CD4-positive, alpha-beta memory T cell (primary cell): ENCODE measurements at regions of chr17 and their contacts with region 1.

Region 1: DNA sequence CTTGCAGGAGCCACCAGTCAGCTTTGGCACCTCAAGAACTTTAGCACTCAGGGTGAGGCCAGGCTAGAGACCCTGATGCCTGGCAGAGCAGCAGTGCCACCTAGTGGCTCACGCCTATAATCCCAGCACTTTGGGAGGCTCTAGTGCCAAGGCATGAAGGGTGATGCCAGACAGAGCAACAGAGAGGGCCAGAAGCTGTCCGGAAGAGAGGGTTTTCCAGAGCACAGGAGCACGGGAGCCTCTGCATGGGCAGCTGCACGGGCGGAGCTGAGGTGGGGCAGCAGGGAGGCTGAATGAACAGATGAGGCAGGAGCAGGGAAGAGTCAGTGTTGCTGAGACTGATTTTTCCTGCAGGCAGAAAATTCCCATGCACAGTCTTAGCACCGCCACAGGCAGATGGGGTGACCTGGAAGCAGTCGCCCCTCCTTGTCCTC is 38.9 kb downstream of the MYH3 start:
- DNase-seq: peak in 4 of 5 donors; percentile 39 to 46 (median 46)
- H3K4me3 ChIP-seq: no peak overlapping the region
- H3K4me3 Mint-ChIP-seq: no peak overlapping the region
- H3K27ac ChIP-seq: no peak overlapping the region
- H3K27ac Mint-ChIP-seq: peak overlapping the region in 1 of 7 donors; percentile 38
- H3K4me1 ChIP-seq: no peaks in the 10 kb centered on the region
- H3K4me1 Mint-ChIP-seq: peaks cover 0 to 4% (median 0%) of the 10 kb centered on the region in 4 donors
- H3K27me3 ChIP-seq: no peaks in the 10 kb centered on the region
- H3K27me3 Mint-ChIP-seq: peaks cover 4 to 8% of the 10 kb centered on the region in 2 donors

Region 2: DNA sequence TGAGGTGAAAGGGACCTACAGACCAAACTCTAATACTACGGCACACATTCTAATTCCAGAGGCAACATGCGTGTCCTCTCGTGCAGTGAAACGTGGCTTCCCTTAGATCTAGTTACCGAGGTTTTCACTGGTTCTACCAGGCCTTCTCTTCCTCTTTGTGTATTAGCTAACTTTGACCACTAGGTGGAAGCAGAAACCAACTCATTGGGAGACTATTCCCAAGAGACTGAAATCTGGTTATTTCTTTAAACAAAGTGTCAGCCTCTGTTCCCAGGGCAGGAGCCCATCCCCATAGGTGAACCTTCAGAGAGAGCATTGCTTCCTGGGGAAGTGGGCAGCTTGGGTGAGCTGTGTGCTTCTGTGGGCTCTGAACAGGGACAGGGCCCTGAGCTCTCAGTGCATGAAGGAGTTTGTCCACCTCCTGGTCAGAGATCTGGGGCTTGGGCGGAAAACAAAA is 693.5 kb before region 1 on chr17:
- CTCF ChIA-PET with region 1: interaction called, 11 read pairs
- POLR2A ChIA-PET with region 1: no interaction called
- intact Hi-C with region 1: no loop called
- DNase-seq: peak in 4 of 5 donors; percentile 26 to 45 (median 38)
- H3K4me3 ChIP-seq: no peak overlapping the region
- H3K4me3 Mint-ChIP-seq: no peak overlapping the region
- H3K27ac ChIP-seq: no peak overlapping the region
- H3K27ac Mint-ChIP-seq: peak overlapping the region in 1 of 7 donors; percentile 82
- H3K4me1 ChIP-seq: no peaks in the 10 kb centered on the region
- H3K4me1 Mint-ChIP-seq: peaks cover 2 to 6% (median 3%) of the 10 kb centered on the region in 4 donors
- H3K27me3 ChIP-seq: no peaks in the 10 kb centered on the region
- H3K27me3 Mint-ChIP-seq: no peaks in the 10 kb centered on the region

Region 3: GRCh38 chr17:10349403-10349802 is 268.8 kb before region 1 on chr17:
- CTCF ChIA-PET with region 1: no interaction called
- POLR2A ChIA-PET with region 1: no interaction called
- intact Hi-C with region 1: no loop called
- DNase-seq: no peak
- H3K4me3 ChIP-seq: no peak overlapping the region
- H3K4me3 Mint-ChIP-seq: no peak overlapping the region
- H3K27ac ChIP-seq: no peak overlapping the region
- H3K27ac Mint-ChIP-seq: no peak overlapping the region
- H3K4me1 ChIP-seq: no peaks in the 10 kb centered on the region
- H3K4me1 Mint-ChIP-seq: no peaks in the 10 kb centered on the region
- H3K27me3 ChIP-seq: no peaks in the 10 kb centered on the region
- H3K27me3 Mint-ChIP-seq: no peaks in the 10 kb centered on the region

Region 4: DNA sequence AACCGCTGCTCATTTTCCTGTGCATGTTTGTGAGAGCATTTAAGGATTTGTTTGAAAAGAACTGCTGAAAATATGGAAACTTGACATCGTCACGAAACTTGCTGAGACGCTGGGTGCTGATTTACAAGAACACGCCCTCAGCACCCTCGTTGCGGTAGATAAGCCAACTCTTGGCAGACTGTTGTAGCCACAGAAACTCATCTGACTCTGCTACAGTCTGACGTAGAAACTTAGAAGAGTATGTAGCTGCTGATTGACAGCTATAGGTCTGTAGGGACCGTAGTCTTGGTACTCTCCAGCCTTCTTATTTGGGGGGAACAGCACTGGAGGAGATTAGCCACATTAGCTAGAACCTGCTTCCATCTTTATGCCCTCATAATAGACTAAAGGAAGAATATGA is 32.7 kb before region 1 on chr17:
- CTCF ChIA-PET with region 1: interaction called, 11 read pairs
- POLR2A ChIA-PET with region 1: no interaction called
- intact Hi-C with region 1: no loop called
- DNase-seq: no peak
- H3K4me3 ChIP-seq: no peak overlapping the region
- H3K4me3 Mint-ChIP-seq: no peak overlapping the region
- H3K27ac ChIP-seq: no peak overlapping the region
- H3K27ac Mint-ChIP-seq: no peak overlapping the region
- H3K4me1 ChIP-seq: no peaks in the 10 kb centered on the region
- H3K4me1 Mint-ChIP-seq: no peaks in the 10 kb centered on the region
- H3K27me3 ChIP-seq: no peaks in the 10 kb centered on the region
- H3K27me3 Mint-ChIP-seq: peaks cover 13 to 17% of the 10 kb centered on the region in 2 donors

Region 5: GRCh38 chr17:10631048-10631700 is 13.0 kb after region 1 on chr17:
- CTCF ChIA-PET with region 1: interaction called, 185 read pairs
- POLR2A ChIA-PET with region 1: no interaction called
- intact Hi-C with region 1: no loop called
- DNase-seq: peak in 1 of 5 donors; percentile 33
- H3K4me3 ChIP-seq: no peak overlapping the region
- H3K4me3 Mint-ChIP-seq: peak overlapping the region in 1 of 8 donors; percentile 45
- H3K27ac ChIP-seq: no peak overlapping the region
- H3K27ac Mint-ChIP-seq: no peak overlapping the region
- H3K4me1 ChIP-seq: no peaks in the 10 kb centered on the region
- H3K4me1 Mint-ChIP-seq: peaks cover 0 to 6% (median 4%) of the 10 kb centered on the region in 4 donors
- H3K27me3 ChIP-seq: no peaks in the 10 kb centered on the region
- H3K27me3 Mint-ChIP-seq: no peaks in the 10 kb centered on the region

Region 6: DNA sequence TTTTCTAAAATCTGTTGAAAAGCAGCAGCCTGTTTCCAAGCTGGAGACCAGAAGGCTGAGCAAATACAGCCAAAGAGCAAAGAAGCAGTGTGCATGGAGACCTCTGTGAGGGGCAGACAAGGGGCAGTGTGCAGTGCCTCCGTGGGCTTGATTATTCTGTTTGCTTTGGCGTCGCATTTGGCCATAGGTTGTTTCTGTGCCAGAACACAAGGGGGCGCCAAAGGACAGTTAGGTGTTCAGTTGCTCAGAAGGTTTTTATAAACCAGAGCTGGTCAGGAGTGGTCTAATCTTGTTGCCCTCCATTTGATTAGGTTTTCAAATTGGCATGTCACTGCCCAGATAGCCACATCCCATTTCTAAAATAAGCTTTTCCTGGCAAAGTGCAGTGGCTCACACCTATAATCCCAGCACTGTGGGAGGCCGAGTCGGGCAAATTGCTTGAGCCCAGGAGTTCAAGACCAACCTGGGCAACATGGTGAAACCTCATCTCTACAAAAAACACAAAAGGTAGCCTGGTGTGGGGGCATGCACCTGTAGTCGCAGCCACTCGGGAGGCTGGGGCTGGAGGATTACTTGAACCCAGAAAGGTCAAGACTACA is 28.3 kb after region 1 on chr17:
- CTCF ChIA-PET with region 1: interaction called, 39 read pairs
- POLR2A ChIA-PET with region 1: no interaction called
- intact Hi-C with region 1: no loop called
- DNase-seq: peak; percentile 58 to 65 (median 63)
- H3K4me3 ChIP-seq: no peak overlapping the region
- H3K4me3 Mint-ChIP-seq: no peak overlapping the region
- H3K27ac ChIP-seq: no peak overlapping the region
- H3K27ac Mint-ChIP-seq: no peak overlapping the region
- H3K4me1 ChIP-seq: no peaks in the 10 kb centered on the region
- H3K4me1 Mint-ChIP-seq: peaks cover 0 to 5% (median 2%) of the 10 kb centered on the region in 4 donors
- H3K27me3 ChIP-seq: no peaks in the 10 kb centered on the region
- H3K27me3 Mint-ChIP-seq: no peaks in the 10 kb centered on the region

Region 7: GRCh38 chr17:10718547-10718946 is 100.3 kb after region 1 on chr17:
- CTCF ChIA-PET with region 1: no interaction called
- POLR2A ChIA-PET with region 1: no interaction called
- intact Hi-C with region 1: no loop called
- DNase-seq: no peak
- H3K4me3 ChIP-seq: no peak overlapping the region
- H3K4me3 Mint-ChIP-seq: no peak overlapping the region
- H3K27ac ChIP-seq: no peak overlapping the region
- H3K27ac Mint-ChIP-seq: peak overlapping the region in 2 of 7 donors; percentile 25 to 54
- H3K4me1 ChIP-seq: no peaks in the 10 kb centered on the region
- H3K4me1 Mint-ChIP-seq: peaks cover 0 to under 1% (median 0%) of the 10 kb centered on the region in 4 donors
- H3K27me3 ChIP-seq: no peaks in the 10 kb centered on the region
- H3K27me3 Mint-ChIP-seq: no peaks in the 10 kb centered on the region

Region 8: DNA sequence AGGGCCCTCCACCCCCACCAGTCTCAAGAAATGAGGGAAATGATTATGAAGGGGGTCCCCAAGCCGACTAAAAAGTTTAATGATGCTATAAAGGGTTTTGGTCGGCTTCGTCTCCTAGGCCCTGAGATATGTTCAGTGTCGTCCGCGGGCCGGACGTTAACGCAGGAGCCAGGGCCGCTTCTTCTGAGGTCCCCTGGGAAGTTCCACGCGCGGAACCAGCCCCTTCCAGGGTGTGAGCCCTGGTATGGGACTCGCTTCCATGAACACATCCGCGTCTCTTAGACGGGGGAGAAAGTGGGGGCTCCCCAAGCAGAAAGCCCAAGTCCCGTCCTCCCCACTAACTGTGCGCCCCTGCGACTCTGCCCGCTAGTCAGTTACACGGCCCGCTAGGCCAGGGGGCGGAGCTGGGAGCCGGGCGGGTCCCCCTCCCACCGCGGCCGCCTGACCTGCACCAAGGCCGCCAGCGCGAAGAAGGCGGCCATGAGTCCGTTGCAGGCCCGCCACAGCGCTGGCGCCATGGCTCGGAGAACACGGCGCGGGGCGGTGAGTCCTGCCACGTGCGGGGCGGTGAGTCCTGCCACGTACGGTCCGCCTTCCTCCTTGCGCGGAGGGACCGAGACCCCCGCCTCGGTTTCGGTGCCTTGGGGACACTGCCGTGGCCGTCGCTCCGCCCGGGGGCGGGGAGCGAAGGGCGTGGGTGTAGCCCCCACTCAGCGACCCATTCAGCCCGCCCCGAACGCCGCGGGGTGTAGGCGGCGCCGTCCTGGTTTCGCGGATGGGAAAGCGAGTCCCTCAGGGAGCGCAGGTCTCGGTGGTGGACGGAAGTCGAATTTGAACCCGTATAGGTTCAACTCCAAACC is 111.3 kb after region 1 on chr17 and contains the start of gene TMEM220:
- CTCF ChIA-PET with region 1: no interaction called
- POLR2A ChIA-PET with region 1: no interaction called
- intact Hi-C with region 1: no loop called
- DNase-seq: peak in 4 of 5 donors; percentile 17 to 22 (median 19)
- H3K4me3 ChIP-seq: peak within 1 kb of the TSS; percentile 22 to 46
- H3K4me3 Mint-ChIP-seq: peak within 1 kb of the TSS; percentile 87 to 93 (median 91)
- H3K27ac ChIP-seq: no peak within 1 kb of the TSS
- H3K27ac Mint-ChIP-seq: peak within 1 kb of the TSS in 6 of 7 donors; percentile 38 to 90 (median 72)
- H3K4me1 ChIP-seq: no peaks in the 10 kb centered on the region
- H3K4me1 Mint-ChIP-seq: peaks cover 3 to 20% (median 6%) of the 10 kb centered on the region in 4 donors
- H3K27me3 ChIP-seq: no peaks in the 10 kb centered on the region
- H3K27me3 Mint-ChIP-seq: peaks cover 0 to 2% of the 10 kb centered on the region in 2 donors
- total RNA-seq, gene TMEM220: 1.8 to 3.0 TPM

Region 9: DNA sequence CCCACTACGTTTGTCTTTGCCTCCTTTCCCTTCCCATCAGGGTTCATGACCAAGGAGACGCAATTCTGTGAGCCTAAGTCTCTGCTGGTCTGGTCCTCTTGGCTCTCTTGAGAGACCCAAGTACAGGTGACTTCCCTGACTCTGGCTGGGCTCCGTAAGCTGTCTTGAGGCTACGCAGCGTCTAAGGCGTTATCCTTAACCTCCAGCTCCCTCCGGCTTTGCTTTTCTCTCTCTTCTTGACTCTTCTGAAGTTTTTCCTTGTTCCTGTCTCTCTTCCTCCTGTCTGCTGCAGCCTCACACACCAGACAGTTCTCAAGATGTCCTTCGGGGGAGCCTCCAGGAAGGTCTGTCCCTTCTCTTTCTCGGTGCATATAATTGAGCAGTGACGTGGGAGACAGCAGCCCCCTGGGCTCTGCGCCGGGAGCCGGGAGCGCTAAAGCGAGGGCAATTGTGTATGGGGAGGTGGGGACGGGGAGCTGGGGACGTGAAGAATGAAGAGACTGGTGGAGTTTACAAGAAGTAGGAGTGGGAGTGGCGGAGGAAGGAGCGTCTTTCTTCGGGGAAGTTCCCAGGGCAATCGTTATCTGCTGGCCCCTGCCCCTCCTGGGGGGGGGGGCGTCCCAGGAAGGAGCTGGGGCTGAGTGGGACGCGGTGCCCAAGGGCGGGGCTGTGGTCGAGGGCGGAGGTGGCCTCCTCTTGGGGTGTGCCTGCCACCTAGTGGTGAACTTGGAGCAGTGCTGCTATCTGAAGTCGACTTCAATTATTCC is 226.6 kb after region 1 on chr17:
- CTCF ChIA-PET with region 1: interaction called, 6 read pairs
- POLR2A ChIA-PET with region 1: no interaction called
- intact Hi-C with region 1: loop called (anchors 1 kb)
- DNase-seq: peak; percentile 60 to 66 (median 64)
- H3K4me3 ChIP-seq: peak overlapping the region in 1 of 2 donors; percentile 50
- H3K4me3 Mint-ChIP-seq: peak overlapping the region; percentile 75 to 89 (median 83)
- H3K27ac ChIP-seq: no peak overlapping the region
- H3K27ac Mint-ChIP-seq: peak overlapping the region in 2 of 7 donors; percentile 9 to 44
- H3K4me1 ChIP-seq: peaks cover 7% of the 10 kb centered on the region
- H3K4me1 Mint-ChIP-seq: peaks cover 2 to 12% (median 8%) of the 10 kb centered on the region in 4 donors
- H3K27me3 ChIP-seq: no peaks in the 10 kb centered on the region
- H3K27me3 Mint-ChIP-seq: peaks cover 6 to 17% of the 10 kb centered on the region in 2 donors